Activated B cell treated with CpG ODN at 0.5 μM for 24 hours (primary cell): ENCODE measurements at regions of chr5 and their contacts with region 1.

Region 1: DNA sequence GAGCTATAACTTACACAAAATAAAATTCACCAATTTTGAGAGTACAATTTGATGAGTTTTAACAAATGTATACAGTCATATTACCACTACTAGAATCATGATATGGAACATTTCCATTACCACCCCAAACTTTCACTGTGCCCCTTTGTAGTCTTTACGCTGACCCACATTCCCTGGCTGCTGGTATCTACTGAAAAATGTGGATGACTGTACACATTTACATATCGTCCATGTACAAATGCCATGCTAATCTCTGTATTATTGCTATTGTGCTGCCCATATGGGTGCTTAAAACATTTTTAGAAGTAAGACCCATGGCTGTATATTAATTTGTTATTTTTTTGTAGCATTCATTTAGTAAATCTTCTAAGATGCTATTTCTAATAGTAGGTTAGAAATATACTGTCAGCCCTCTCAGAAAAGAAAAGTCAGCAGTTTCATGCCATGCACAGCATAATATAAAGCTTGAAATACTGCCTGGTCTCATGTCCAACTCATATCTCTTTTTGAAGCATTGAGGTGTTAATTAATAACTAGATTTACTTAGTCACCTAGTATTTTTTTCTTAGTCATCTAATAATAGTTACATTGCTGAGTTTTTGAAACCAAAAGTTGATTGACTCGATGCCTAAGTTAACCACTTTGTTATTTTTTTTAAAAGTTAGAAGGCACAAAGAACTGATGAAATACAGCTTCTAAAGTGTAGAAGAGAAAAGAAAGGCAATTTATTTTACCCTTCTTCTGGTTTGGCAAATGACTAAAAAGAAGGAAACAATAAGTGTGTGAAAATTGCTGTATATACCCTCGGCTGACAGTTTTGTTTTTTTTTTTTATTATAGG is 188.3 kb upstream of the MEF2C start:
- DNase-seq: no peak
- ATAC-seq: no peak
- H3K4me3 Mint-ChIP-seq: peak overlapping the region; percentile 59
- H3K27ac Mint-ChIP-seq: peak overlapping the region; percentile 50
- H3K4me1 Mint-ChIP-seq: peaks cover 23% of the 10 kb centered on the region
- H3K27me3 Mint-ChIP-seq: no peaks in the 10 kb centered on the region
- CTCF ChIP-seq: no peak

Region 2: DNA sequence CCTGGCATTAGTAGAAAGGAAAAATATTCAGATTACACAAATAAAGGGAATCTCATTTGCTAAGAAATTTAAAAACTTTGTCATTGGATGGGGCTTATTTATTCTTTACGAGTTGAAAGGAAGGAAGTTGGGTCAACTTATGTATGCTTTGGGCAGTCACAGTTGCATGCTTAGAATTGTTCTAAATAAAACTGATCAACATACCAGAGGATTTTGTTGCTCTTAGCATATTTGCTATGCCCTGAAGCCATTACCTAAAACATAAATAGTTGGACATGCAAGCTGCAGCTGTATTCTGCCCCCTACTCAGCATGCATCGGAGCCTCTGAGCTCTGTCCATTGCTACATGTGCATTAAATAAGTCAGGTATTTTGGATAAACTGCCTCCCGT is 15.6 kb before region 1 on chr5:
- CTCF ChIA-PET with region 1: no interaction called
- POLR2A ChIA-PET with region 1: no interaction called
- intact Hi-C with region 1: loop called (anchors 2 kb)
- DNase-seq: no peak
- ATAC-seq: no peak
- H3K4me3 Mint-ChIP-seq: no peak overlapping the region
- H3K27ac Mint-ChIP-seq: no peak overlapping the region
- H3K4me1 Mint-ChIP-seq: no peaks in the 10 kb centered on the region
- H3K27me3 Mint-ChIP-seq: no peaks in the 10 kb centered on the region
- CTCF ChIP-seq: no peak

Region 3: GRCh38 chr5:89081360-89081759 is 10.0 kb after region 1 on chr5:
- CTCF ChIA-PET with region 1: no interaction called
- POLR2A ChIA-PET with region 1: interaction called, 3 read pairs
- intact Hi-C with region 1: loop called (anchors 1 kb)
- DNase-seq: no peak
- ATAC-seq: peak; percentile 75
- H3K4me3 Mint-ChIP-seq: peak overlapping the region; percentile 35
- H3K27ac Mint-ChIP-seq: peak overlapping the region; percentile 31
- H3K4me1 Mint-ChIP-seq: peaks cover 22% of the 10 kb centered on the region
- H3K27me3 Mint-ChIP-seq: no peaks in the 10 kb centered on the region
- CTCF ChIP-seq: no peak